Activated T-helper 1 cell treated with anti-CD3 and anti-CD28 coated beads, Interleukin-12 subunit alpha, Interleukin-12 subunit beta, Interleukin-2, Interleukin-4 antibody, amounts not matched to agents 30 ng/mL and 10 ng/mL and 1 ng/mL, durations not matched to agents 14 hours and 24 hours and 36 hours (primary cell): ENCODE measurements at regions of chr1 and their contacts with region 1.

Region 1: GRCh38 chr1:111481387-111482221 is 7.8 kb downstream of the C1orf162 start:
- DNase-seq: peak; percentile 31
- H3K4me3 Mint-ChIP-seq: no peak overlapping the region
- H3K27ac Mint-ChIP-seq: no peak overlapping the region
- H3K4me1 Mint-ChIP-seq: peaks cover 20% of the 10 kb centered on the region
- H3K27me3 Mint-ChIP-seq: peaks cover 47% of the 10 kb centered on the region

Region 2: GRCh38 chr1:110967256-110967655 is 514.3 kb before region 1 on chr1:
- intact Hi-C with region 1: no loop called
- DNase-seq: no peak
- H3K4me3 Mint-ChIP-seq: no peak overlapping the region
- H3K27ac Mint-ChIP-seq: no peak overlapping the region
- H3K4me1 Mint-ChIP-seq: peaks cover 23% of the 10 kb centered on the region
- H3K27me3 Mint-ChIP-seq: peaks cover 25% of the 10 kb centered on the region

Region 3: DNA sequence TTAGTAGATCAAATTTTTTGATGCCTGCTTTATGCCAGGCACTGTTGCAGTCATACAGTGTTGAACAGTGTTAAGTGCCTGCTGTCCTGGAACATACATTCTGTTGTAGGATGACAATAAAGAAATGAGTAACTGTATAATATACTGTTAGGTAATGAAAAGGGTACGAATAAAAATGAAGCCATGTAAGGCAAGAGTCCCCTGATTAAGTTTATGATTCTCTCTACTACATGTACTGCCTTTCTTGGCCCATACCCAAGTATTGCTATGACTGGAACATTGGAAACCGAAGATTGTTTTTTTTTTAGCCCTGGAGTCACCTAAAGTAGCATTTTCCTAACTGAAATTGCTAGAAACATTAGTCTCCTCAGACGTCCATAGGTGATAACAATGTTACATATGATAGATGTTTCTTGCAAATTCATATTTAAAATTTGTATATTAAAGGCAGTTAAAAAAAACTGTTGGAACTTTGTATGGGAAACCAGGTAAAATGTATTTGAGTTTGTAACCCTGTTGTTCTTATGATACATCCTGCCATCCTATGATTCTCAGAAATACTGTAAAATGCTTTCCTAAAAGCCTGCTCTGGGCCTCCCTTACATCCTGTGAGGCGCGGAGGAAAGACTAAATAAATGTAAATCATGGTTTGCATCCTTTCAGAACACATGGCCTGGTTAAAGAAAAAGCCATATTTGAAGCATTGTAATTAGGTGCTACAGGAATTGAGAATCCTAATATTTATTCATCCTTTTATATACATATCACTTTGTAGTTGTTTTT is 26.6 kb before region 1 on chr1:
- intact Hi-C with region 1: loop called (anchors 1 kb)
- DNase-seq: no peak
- H3K4me3 Mint-ChIP-seq: peak overlapping the region; percentile 67
- H3K27ac Mint-ChIP-seq: peak overlapping the region; percentile 79
- H3K4me1 Mint-ChIP-seq: peaks cover 65% of the 10 kb centered on the region
- H3K27me3 Mint-ChIP-seq: no peaks in the 10 kb centered on the region

Region 4: DNA sequence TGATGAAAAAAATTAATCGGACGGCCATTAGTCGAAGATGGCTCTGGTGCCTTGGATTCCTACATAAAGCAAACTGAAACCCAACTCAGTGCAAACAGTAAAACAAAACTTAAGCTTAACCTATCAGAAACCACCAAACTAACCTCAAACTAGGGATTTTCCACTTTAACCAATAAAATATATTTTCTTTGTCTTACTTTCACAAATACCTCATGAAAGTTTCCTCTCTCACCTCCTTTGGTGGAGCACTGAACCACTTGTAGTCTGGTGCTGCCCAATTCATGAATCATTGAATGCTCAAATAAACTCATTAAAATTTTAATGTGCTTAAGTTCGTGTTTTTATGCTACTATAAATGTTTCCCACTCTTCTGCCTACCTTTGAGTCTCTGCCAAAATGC is 14.8 kb after region 1 on chr1:
- intact Hi-C with region 1: loop called (anchors 1 kb)
- DNase-seq: no peak
- H3K4me3 Mint-ChIP-seq: peak overlapping the region; percentile 5
- H3K27ac Mint-ChIP-seq: peak overlapping the region; percentile 54
- H3K4me1 Mint-ChIP-seq: peaks cover 20% of the 10 kb centered on the region
- H3K27me3 Mint-ChIP-seq: peaks cover 4% of the 10 kb centered on the region

Region 5: GRCh38 chr1:111747282-111747734 is 265.7 kb after region 1 on chr1:
- intact Hi-C with region 1: loop called (anchors 1 kb)
- DNase-seq: peak; percentile 70
- H3K4me3 Mint-ChIP-seq: no peak overlapping the region
- H3K27ac Mint-ChIP-seq: no peak overlapping the region
- H3K4me1 Mint-ChIP-seq: peaks cover 14% of the 10 kb centered on the region
- H3K27me3 Mint-ChIP-seq: peaks cover 28% of the 10 kb centered on the region

Region 6: GRCh38 chr1:111769517-111770146 is 288.0 kb after region 1 on chr1:
- intact Hi-C with region 1: loop called (anchors 1 kb)
- DNase-seq: peak; percentile 14
- H3K4me3 Mint-ChIP-seq: no peak overlapping the region
- H3K27ac Mint-ChIP-seq: no peak overlapping the region
- H3K4me1 Mint-ChIP-seq: peaks cover 15% of the 10 kb centered on the region
- H3K27me3 Mint-ChIP-seq: no peaks in the 10 kb centered on the region

Region 7: DNA sequence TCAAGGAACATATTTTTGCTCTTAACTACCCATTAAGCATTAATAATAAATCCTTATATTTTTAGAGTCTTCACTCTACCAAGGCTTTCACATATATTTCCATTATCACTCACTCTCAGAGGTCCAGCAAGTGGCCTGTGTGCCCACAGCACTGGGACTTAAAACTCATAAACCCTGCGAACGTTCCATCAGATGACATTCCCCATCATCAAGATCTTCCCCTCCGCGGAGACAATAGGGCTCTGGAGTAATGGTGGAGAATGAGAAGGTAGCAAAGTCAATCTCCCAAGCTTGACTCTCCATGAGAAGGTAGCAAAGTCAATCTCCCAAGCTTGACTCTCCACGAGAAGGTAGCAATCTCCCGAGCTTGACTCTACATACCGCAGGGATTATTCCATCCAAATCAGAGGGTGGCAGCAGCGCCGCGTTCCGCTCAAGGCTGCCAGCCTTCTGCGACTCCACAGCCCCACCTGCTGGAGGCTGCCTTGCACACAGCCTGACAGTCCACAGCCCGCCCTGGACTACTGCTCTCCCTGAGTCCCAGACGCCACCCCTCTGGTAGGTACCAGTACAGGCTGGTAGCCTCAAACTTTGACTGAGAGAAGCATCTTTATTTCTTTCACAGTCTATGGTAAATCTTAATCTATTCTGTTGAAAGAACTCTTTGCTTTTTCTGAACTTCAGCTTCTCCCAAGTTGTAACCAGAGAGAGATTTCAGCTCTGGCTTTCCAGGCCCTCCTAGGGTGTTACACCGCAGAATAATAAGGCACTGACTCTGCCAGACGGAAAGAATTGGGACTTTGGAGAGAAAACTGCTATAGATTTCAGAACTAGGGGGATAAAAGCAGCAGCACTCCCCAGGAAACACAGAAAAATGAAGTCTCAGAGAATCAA is 888.0 kb after region 1 on chr1:
- intact Hi-C with region 1: loop called (anchors 5 kb)
- DNase-seq: peak; percentile 69
- H3K4me3 Mint-ChIP-seq: no peak overlapping the region
- H3K27ac Mint-ChIP-seq: no peak overlapping the region
- H3K4me1 Mint-ChIP-seq: peaks cover 5% of the 10 kb centered on the region
- H3K27me3 Mint-ChIP-seq: peaks cover 37% of the 10 kb centered on the region